ENCODE measurements at regions of chr18 and their contacts with region 1.

Region 1: DNA sequence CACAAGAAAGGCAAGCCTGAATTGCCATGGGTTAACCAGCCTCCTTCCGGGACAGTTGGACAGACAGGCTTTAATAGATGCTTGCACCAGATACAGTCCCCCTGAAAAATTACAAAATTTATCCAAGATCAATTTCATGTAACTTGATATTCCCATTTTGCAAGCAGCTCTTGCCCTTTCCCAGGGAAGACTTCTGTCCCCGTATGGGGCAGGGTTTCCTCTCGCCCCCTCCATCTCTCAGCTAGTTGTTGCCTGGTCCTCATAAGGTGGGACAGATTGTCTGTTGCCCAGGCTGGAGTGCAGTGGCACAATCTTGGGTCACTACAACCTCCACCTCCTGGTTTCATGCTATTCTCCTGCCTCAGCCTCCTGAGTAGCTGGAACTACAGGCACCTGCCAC is 61.2 kb downstream of the TTC39C start:
- DNase-seq: no peak
- H3K4me3 Mint-ChIP-seq: no peak overlapping the region
- H3K27ac Mint-ChIP-seq: peak overlapping the region; percentile 77
- H3K4me1 Mint-ChIP-seq: peaks cover 32% of the 10 kb centered on the region
- H3K27me3 Mint-ChIP-seq: no peaks in the 10 kb centered on the region

Region 2: GRCh38 chr18:24019641-24020331 is 55.9 kb before region 1 on chr18:
- intact Hi-C with region 1: loop called (anchors 1 kb)
- DNase-seq: peak; percentile 64
- H3K4me3 Mint-ChIP-seq: peak overlapping the region; percentile 67
- H3K27ac Mint-ChIP-seq: peak overlapping the region; percentile 90
- H3K4me1 Mint-ChIP-seq: peaks cover 78% of the 10 kb centered on the region
- H3K27me3 Mint-ChIP-seq: no peaks in the 10 kb centered on the region

Region 3: DNA sequence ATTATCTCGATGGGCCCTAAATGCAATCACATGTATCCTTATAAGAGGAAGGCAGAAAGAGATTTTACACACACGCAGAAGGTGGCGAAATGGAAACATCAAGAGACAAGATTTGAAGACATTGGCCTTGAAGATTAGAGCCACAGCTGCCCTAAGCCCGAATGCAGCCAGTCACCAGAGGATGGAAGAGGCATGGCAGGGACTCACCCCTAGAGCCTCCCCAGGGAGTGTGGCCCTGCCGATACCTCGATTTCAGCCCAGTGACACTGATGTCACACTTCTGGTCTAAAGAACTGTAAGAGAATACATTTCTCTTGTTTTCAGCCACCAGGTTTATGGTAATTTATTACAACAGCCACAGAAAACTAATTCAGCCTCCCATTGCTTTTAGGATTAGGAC is 43.8 kb before region 1 on chr18:
- intact Hi-C with region 1: no loop called
- DNase-seq: no peak
- H3K4me3 Mint-ChIP-seq: no peak overlapping the region
- H3K27ac Mint-ChIP-seq: no peak overlapping the region
- H3K4me1 Mint-ChIP-seq: peaks cover 32% of the 10 kb centered on the region
- H3K27me3 Mint-ChIP-seq: no peaks in the 10 kb centered on the region

Region 4: DNA sequence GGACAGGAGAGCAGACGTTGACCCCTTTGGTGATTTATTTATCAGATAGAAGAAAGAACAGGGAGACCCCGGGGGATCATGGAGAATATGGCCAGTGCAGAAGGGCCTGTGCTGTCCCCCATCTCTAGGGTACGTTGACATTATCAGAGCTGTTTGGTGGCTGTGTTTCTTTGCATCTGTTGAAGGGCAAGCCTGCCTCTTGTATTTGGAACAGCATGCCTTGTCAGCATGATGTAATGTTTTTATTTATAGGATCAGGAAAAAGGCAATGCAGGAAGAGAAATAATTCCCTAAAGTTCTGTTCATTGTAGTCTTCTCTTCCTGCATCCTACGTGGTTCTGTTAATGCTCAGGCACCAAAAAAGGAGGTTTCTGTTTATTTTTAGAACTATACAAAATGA is 13.3 kb after region 1 on chr18:
- intact Hi-C with region 1: no loop called
- DNase-seq: no peak
- H3K4me3 Mint-ChIP-seq: no peak overlapping the region
- H3K27ac Mint-ChIP-seq: no peak overlapping the region
- H3K4me1 Mint-ChIP-seq: peaks cover 7% of the 10 kb centered on the region
- H3K27me3 Mint-ChIP-seq: no peaks in the 10 kb centered on the region